IMR-90 (cell line): ENCODE measurements at regions of chr21 and their contacts with region 1.

Region 1: GRCh38 chr21:15058854-15059263 is 5.9 kb downstream of the NRIP1 start:
- DNase-seq: peak; percentile 68
- ATAC-seq: peak; percentile 50
- H3K4me3 ChIP-seq: peak overlapping the region; percentile 47; the same call in 1 of the 2 replicates
- H3K27ac ChIP-seq: peak overlapping the region; percentile 65; the same call in 1 of the 2 replicates
- H3K4me1 ChIP-seq: peaks cover 6% of the 10 kb centered on the region
- H3K27me3 ChIP-seq: no peaks in the 10 kb centered on the region
- CTCF ChIP-seq: no peak
- POLR2A ChIP-seq: no peak
- RAD21 ChIP-seq: no peak

Region 2: DNA sequence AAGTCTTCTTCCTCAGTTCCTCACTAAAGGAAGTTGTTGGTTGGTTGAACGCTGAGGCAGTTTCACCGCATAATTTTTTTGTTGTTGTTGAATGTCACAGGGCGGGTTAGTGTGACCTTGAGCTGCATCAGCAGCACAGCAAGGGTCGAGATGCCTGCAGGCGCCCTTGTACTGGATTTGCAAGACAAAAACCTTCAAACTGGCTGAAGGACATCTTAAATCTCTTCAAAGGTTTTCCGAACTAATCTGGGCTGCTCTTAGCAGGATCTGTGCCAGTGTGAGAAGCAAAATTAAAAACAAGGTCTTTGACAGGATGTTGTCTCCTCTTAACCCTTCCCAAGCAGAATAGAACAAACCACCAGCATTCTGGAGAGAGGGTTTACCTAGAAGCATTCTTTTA is 53.5 kb before region 1 on chr21:
- CTCF ChIA-PET with region 1: no interaction called
- POLR2A ChIA-PET with region 1: no interaction called
- dilution Hi-C with region 1: no loop called
- in situ Hi-C with region 1: no loop called
- intact Hi-C with region 1: loop called (anchors 2 kb)
- DNase-seq: peak; percentile 38
- ATAC-seq: peak; percentile 8; the same call in 1 of the 2 replicates
- H3K4me3 ChIP-seq: peak overlapping the region; percentile 36; the same call in 1 of the 2 replicates
- H3K27ac ChIP-seq: peak overlapping the region; percentile 100
- H3K4me1 ChIP-seq: peaks cover 30% of the 10 kb centered on the region
- H3K27me3 ChIP-seq: no peaks in the 10 kb centered on the region
- CTCF ChIP-seq: no peak
- POLR2A ChIP-seq: no peak
- RAD21 ChIP-seq: no peak

Region 3: GRCh38 chr21:15112858-15113257 is 54.0 kb after region 1 on chr21:
- CTCF ChIA-PET with region 1: no interaction called
- POLR2A ChIA-PET with region 1: no interaction called
- dilution Hi-C with region 1: no loop called
- in situ Hi-C with region 1: no loop called
- intact Hi-C with region 1: no loop called
- DNase-seq: no peak
- ATAC-seq: no peak
- H3K4me3 ChIP-seq: no peak overlapping the region
- H3K27ac ChIP-seq: no peak overlapping the region
- H3K4me1 ChIP-seq: no peaks in the 10 kb centered on the region
- H3K27me3 ChIP-seq: no peaks in the 10 kb centered on the region
- CTCF ChIP-seq: no peak
- POLR2A ChIP-seq: no peak
- RAD21 ChIP-seq: no peak